A549 (cell line): ENCODE measurements at regions of chr1 and their contacts with region 1.

Region 1: GRCh38 chr1:95043141-95043980 is 29.4 kb downstream of the ALG14 start:
- DNase-seq: peak; percentile 66 to 78
- ATAC-seq: peak; percentile 93 to 95
- H3K4me3 ChIP-seq: no peak overlapping the region
- H3K27ac ChIP-seq: peak overlapping the region in 1 of 2 experiments; percentile 35; a peak in 2 of 6 replicates
- H3K4me1 ChIP-seq: 0 out of 3 replicates have a peak, but pooled peaks cover 3% of the 10 kb centered on the region
- CTCF ChIP-seq: peak; percentile 95
- EP300 ChIP-seq: no peak
- POLR2A ChIP-seq: no peak
- RAD21 ChIP-seq: peak; percentile 90 to 92

Region 2: GRCh38 chr1:94843430-94843829 is 199.9 kb before region 1 on chr1:
- CTCF ChIA-PET with region 1: interaction called, 12 read pairs
- POLR2A ChIA-PET with region 1: no interaction called
- DNase-seq: no peak
- ATAC-seq: no peak
- H3K4me3 ChIP-seq: no peak overlapping the region
- H3K27ac ChIP-seq: no peak overlapping the region
- H3K4me1 ChIP-seq: no peaks in the 10 kb centered on the region
- CTCF ChIP-seq: no peak
- EP300 ChIP-seq: no peak
- POLR2A ChIP-seq: no peak
- RAD21 ChIP-seq: no peak

Region 3: DNA sequence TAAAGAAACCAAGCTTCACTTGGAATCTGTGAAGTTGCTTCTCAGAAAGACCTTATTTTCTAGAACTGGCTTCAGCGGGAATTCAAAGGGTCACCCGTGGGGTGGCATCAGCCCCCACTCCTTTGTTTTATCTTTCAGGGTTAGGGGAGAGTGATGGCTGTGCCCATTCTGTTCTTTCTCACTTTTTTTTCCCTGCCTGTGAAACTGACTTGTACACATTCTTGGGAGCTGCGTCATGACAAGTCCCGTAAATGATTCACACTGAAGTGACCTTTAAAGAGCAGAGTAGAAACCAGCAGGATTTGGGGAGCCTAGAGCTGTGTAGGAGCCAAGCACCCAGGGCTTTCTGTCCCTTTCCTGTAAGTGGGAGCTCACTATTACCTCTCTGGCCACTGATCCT is 179.4 kb before region 1 on chr1:
- CTCF ChIA-PET with region 1: interaction called, 36 read pairs
- POLR2A ChIA-PET with region 1: no interaction called
- DNase-seq: peak; percentile 62 to 64
- ATAC-seq: peak; percentile 88 to 94
- H3K4me3 ChIP-seq: peak overlapping the region; percentile 28
- H3K27ac ChIP-seq: peak overlapping the region; percentile 77 to 85
- H3K4me1 ChIP-seq: peaks cover 37% of the 10 kb centered on the region
- CTCF ChIP-seq: no peak
- EP300 ChIP-seq: no peak
- POLR2A ChIP-seq: no peak
- RAD21 ChIP-seq: no peak

Region 4: DNA sequence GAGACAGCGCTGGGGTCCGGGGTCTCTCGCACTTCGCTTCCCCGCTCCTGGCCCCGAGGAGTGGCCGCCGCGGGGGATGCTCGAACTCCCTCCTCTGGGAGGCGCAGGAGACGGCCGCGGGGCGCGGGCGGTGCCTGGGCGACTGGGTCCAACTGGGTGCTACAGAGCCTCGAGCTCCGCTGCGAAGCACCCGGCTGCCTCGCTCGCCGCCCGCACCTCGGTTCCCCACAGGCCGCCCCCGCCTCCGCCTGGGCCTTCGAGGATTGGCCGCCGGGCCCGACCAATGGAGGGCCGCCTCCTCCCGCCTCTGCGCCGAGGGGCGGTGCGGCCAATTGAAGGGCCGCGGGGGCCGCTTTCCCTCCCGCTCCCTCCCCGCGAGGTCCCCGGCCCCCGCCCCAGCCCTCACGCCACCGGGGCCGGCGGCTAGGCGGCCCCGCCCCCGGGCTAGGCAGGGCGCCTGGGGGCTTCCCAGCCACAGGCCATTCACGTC is 116.4 kb before region 1 on chr1 and contains the start of gene CNN3:
- CTCF ChIA-PET with region 1: interaction called, 10 read pairs
- POLR2A ChIA-PET with region 1: no interaction called
- DNase-seq: peak; percentile 76 to 87
- ATAC-seq: peak; percentile 92 to 95
- H3K4me3 ChIP-seq: peak within 1 kb of the TSS; percentile 90
- H3K27ac ChIP-seq: peak within 1 kb of the TSS; percentile 88 to 98
- H3K4me1 ChIP-seq: peaks cover 45% of the 10 kb centered on the region
- CTCF ChIP-seq: no peak
- EP300 ChIP-seq: no peak
- POLR2A ChIP-seq: peak; percentile 76
- RAD21 ChIP-seq: no peak
- polyA plus RNA-seq, gene CNN3: 59.8 and 61.6 TPM in 2 replicates

Region 5: GRCh38 chr1:95023399-95024043 is 19.8 kb before region 1 on chr1:
- CTCF ChIA-PET with region 1: interaction called, 19 read pairs
- POLR2A ChIA-PET with region 1: no interaction called
- DNase-seq: no peak
- ATAC-seq: no peak
- H3K4me3 ChIP-seq: no peak overlapping the region
- H3K27ac ChIP-seq: no peak overlapping the region
- H3K4me1 ChIP-seq: peaks cover 33% of the 10 kb centered on the region
- CTCF ChIP-seq: no peak
- EP300 ChIP-seq: no peak
- POLR2A ChIP-seq: no peak
- RAD21 ChIP-seq: no peak

Region 6: GRCh38 chr1:95058974-95059373 is 15.6 kb after region 1 on chr1:
- CTCF ChIA-PET with region 1: interaction called, 13 read pairs
- POLR2A ChIA-PET with region 1: no interaction called
- DNase-seq: no peak
- ATAC-seq: no peak
- H3K4me3 ChIP-seq: no peak overlapping the region
- H3K27ac ChIP-seq: no peak overlapping the region
- H3K4me1 ChIP-seq: no peaks in the 10 kb centered on the region
- CTCF ChIP-seq: no peak
- EP300 ChIP-seq: no peak
- POLR2A ChIP-seq: no peak
- RAD21 ChIP-seq: no peak